A673 (cell line): ENCODE measurements at regions of chr5 and their contacts with region 1.

Region 1: GRCh38 chr5:77491783-77492652 is at the start of gene WDR41:
- DNase-seq: peak; percentile 93
- H3K4me3 ChIP-seq: peak within 1 kb of the TSS; percentile 83
- H3K27ac ChIP-seq: peak within 1 kb of the TSS; percentile 85
- H3K4me1 ChIP-seq: peaks cover 4% of the 10 kb centered on the region
- H3K27me3 ChIP-seq: peaks cover 36% of the 10 kb centered on the region
- CTCF ChIP-seq: peak; percentile 82
- total RNA-seq, gene WDR41: 30.4 and 36.6 TPM in 2 replicates

Region 2: DNA sequence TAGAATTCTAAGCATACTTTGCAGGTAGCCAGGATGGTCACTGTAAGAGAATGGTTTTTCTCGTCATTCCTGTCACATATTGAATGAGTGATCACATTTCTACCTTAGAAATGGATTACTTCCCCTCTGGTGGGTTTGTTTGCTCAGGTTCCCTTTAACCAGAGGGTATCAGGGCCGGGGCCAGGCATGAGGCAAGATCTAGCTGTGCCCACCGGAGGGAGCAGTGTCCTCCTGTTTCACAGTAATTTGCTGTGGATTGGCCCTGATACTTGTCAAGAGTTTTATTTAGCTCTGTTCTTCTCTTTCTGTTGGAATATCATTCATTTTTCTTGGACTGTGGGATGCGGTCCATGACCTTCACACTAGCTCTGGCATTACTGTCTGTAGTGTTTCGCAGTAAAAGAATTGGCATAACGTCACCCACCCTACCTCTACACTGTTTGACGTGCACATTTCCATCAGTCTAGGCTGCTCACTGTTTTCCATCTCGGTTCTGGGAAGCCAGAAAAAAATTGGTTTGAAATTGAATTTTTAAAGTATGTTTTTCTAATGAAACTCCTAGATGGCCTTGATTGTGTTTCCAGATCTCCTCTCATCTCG is 362.5 kb before region 1 on chr5:
- CTCF ChIA-PET with region 1: interaction called, 3 read pairs
- POLR2A ChIA-PET with region 1: no interaction called
- intact Hi-C with region 1: loop called (anchors 5 kb)
- DNase-seq: peak; percentile 48
- H3K4me3 ChIP-seq: no peak overlapping the region
- H3K27ac ChIP-seq: no peak overlapping the region
- H3K4me1 ChIP-seq: no peaks in the 10 kb centered on the region
- H3K27me3 ChIP-seq: no peaks in the 10 kb centered on the region
- CTCF ChIP-seq: peak; percentile 65